Left ventricle myocardium superior (tissue), 1 donor: ENCODE measurements at regions of chr6 and their contacts with region 1.

Region 1: GRCh38 chr6:31079656-31080261 is 32.6 kb downstream of the C6orf15 start:
- DNase-seq: peak; percentile 51
- ATAC-seq: peak; percentile 70

Region 2: GRCh38 chr6:30357678-30358540 is 721.9 kb before region 1 on chr6:
- intact Hi-C with region 1: no loop called
- DNase-seq: no peak
- ATAC-seq: peak; percentile 60

Region 3: DNA sequence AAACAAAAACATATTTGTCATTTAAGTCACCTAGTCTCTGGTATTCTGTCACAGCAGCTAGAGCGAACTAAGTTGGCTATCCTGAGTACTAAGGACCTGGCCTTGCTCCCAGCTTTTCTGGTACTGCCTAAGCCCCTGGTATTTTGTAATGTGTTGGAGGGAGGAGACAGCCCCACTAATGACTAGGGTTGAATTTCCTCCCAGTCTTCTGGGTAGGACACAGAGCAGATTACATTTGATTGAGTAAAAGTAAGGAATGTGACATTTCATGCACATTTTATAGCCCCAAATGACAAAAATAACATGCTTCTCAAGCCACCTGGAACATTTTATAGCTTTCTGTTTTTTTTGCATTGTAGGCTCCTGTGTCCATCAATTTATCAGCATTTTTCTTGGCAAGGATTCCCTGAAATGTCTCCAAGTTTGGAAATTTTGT is 243.3 kb before region 1 on chr6:
- intact Hi-C with region 1: loop called (anchors 5 kb)
- DNase-seq: no peak
- ATAC-seq: peak; percentile 93

Region 4: GRCh38 chr6:30914076-30914853 is 165.5 kb before region 1 on chr6 and contains the start of gene VARS2:
- intact Hi-C with region 1: no loop called
- DNase-seq: peak; percentile 95
- ATAC-seq: peak; percentile 95
- total RNA-seq, gene VARS2: 18.2 TPM

Region 5: DNA sequence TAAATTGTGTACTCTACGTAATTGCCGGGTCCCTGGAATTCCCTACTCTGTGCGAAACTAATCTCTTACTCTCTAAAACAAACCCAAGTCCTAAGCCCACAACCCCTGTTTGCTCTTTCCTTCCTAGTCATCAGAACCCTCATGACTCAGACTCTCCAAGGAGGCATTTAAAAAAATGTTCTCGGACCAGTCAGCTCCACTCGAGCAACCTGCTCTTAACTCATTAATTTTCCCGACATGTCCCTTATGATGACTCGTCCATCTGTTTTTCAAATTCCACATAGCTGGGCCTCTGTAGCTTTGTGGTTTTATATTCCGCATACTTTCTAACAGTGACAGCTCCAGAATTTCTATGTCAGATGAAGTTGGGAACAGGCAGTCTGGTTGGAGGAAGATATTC is 72.1 kb before region 1 on chr6:
- intact Hi-C with region 1: no loop called
- DNase-seq: no peak
- ATAC-seq: no peak

Region 6: GRCh38 chr6:31114970-31115849 is 35.5 kb after region 1 on chr6:
- intact Hi-C with region 1: no loop called
- DNase-seq: no peak
- ATAC-seq: peak; percentile 46